ENCODE measurements at regions of chr6 and their contacts with region 1.

Region 1: DNA sequence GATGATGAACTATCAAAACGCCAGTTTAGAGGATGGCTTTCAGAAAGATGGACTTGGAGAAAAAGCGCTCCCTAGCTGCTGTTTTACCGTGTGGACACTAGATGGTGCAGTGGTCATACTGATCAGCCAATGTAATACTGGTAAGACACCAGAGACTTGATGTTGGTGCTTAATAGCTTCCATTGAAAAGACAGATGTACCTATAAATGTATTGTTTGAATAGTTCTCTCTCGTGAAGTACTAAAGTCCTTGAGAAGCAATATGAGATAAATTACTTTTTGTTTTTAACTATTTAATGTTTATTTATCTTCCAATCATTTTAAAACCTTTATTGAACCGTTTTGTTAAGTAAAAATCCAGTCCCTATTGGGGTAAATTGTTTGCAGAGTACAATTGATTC is 63.9 kb upstream of the FUCA2 start:
- DNase-seq: peak; percentile 82
- H3K27ac ChIP-seq: no peak overlapping the region
- CTCF ChIP-seq: peak; percentile 92

Region 2: DNA sequence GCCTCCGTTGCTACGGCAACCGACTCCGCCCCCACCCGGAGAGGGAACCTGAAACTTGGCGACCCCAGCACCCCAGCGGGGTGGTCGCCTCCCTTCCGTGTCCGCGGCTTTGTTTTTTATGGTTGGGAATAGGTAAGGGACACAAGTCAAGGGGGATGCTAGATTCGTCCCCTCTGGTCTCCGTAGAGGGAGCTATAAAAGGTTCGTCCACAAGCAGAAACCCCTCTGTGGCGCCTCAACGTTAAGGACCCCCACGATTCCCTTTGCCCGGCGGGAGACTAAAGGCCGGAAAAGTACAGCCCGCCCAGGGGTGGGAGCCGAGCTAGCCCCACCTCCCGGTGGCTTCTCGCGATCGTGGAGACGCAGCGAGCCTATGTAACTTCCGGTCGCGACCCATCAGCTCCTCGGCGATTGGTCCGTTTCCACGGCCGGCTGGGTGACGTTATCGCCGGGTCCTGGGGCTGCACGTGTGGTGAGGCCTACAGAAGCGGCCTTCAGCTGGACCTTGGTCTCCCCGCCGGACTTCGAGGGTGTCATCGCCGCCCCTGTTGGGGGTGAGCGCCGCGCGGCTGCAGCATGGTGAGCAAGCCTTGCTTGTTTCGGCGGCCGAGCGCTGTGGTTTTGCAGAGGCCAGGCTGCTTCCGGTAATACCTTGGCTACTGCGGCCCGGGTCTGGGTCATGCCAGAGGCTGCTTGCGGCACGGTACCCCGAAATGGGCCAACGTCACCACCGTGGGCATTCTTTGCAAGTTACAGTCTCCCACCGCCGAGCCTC is 267.6 kb after region 1 on chr6 and contains the start of gene LTV1:
- CTCF ChIA-PET with region 1: interaction called, 15 read pairs
- POLR2A ChIA-PET with region 1: no interaction called
- DNase-seq: peak; percentile 99
- H3K27ac ChIP-seq: peak within 1 kb of the TSS; percentile 78
- CTCF ChIP-seq: no peak

Region 3: DNA sequence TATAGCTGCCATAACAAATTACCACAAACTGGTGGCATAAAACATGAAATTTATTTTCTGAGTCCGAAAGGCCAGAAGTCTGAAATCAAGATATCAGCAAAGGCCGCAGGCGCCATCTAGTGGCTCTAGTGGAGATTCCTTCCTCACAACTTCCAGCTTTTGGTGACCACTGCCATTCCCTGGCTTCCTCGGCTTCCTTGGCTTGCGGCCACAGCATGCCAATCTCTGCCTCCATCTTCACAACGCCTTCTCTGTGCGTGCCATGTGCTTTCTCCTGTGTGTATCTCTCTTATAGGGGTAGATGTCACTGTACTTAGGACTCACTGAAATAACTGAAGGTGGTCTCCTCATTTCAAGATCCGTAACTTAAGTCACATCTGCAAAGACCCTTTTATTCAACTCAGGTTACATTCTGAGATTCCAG is 438.1 kb after region 1 on chr6:
- CTCF ChIA-PET with region 1: interaction called, 48 read pairs
- POLR2A ChIA-PET with region 1: no interaction called
- DNase-seq: peak; percentile 66
- H3K27ac ChIP-seq: no peak overlapping the region
- CTCF ChIP-seq: peak; percentile 91